ENCODE measurements at regions of chr4 and their contacts with region 1.

Region 1: GRCh38 chr4:24794916-24795665 is at the start of gene SOD3:
- DNase-seq: peak; percentile 88 to 96
- H3K4me3 ChIP-seq: peak within 1 kb of the TSS; percentile 47 to 58
- H3K27ac ChIP-seq: peak within 1 kb of the TSS; percentile 93 to 96
- H3K4me1 ChIP-seq: peaks cover 0 to 45% (median 19%) of the 10 kb centered on the region in 4 donors
- H3K27me3 ChIP-seq: no peaks in the 10 kb centered on the region
- CTCF ChIP-seq: no peak

Region 2: GRCh38 chr4:24584175-24584850 is 210.8 kb before region 1 on chr4 and contains the start of gene DHX15:
- intact Hi-C with region 1: loop called (anchors 10 kb)
- DNase-seq: peak; percentile 97
- H3K4me3 ChIP-seq: peak within 1 kb of the TSS; percentile 92 to 100
- H3K27ac ChIP-seq: peak within 1 kb of the TSS; percentile 96 to 98
- H3K4me1 ChIP-seq: peaks cover 0 to 42% (median 26%) of the 10 kb centered on the region in 4 donors
- H3K27me3 ChIP-seq: no peaks in the 10 kb centered on the region
- CTCF ChIP-seq: no peak

Region 3: GRCh38 chr4:24850674-24851073 is 55.6 kb after region 1 on chr4:
- intact Hi-C with region 1: loop called (anchors 5 kb)
- DNase-seq: peak; percentile 56 to 81
- H3K4me3 ChIP-seq: no peak overlapping the region
- H3K27ac ChIP-seq: peak overlapping the region; percentile 53
- H3K4me1 ChIP-seq: peaks cover 0 to 52% (median 22%) of the 10 kb centered on the region in 4 donors
- H3K27me3 ChIP-seq: no peaks in the 10 kb centered on the region
- CTCF ChIP-seq: no peak

Region 4: GRCh38 chr4:25030277-25031076 is 235.4 kb after region 1 on chr4 and contains the start of gene LGI2:
- intact Hi-C with region 1: loop called (anchors 5 kb)
- DNase-seq: peak; percentile 51 to 80
- H3K4me3 ChIP-seq: peak within 1 kb of the TSS; percentile 61 to 64
- H3K27ac ChIP-seq: peak within 1 kb of the TSS; percentile 63 to 74
- H3K4me1 ChIP-seq: peaks cover 0 to 25% (median 14%) of the 10 kb centered on the region in 4 donors
- H3K27me3 ChIP-seq: no peaks in the 10 kb centered on the region
- CTCF ChIP-seq: no peak

Region 5: GRCh38 chr4:25065475-25065874 is 270.4 kb after region 1 on chr4:
- intact Hi-C with region 1: loop called (anchors 10 kb)
- DNase-seq: no peak
- H3K4me3 ChIP-seq: no peak overlapping the region
- H3K27ac ChIP-seq: no peak overlapping the region
- H3K4me1 ChIP-seq: peaks cover 0 to 16% (median 0%) of the 10 kb centered on the region in 4 donors
- H3K27me3 ChIP-seq: no peaks in the 10 kb centered on the region
- CTCF ChIP-seq: no peak

Region 6: GRCh38 chr4:25159884-25160713 is 365.0 kb after region 1 on chr4 and contains the start of gene SEPSECS:
- intact Hi-C with region 1: loop called (anchors 10 kb)
- DNase-seq: peak; percentile 96 to 99
- H3K4me3 ChIP-seq: peak within 1 kb of the TSS; percentile 61 to 78
- H3K27ac ChIP-seq: peak within 1 kb of the TSS; percentile 90 to 99
- H3K4me1 ChIP-seq: peaks cover 0 to 21% (median 11%) of the 10 kb centered on the region in 4 donors
- H3K27me3 ChIP-seq: no peaks in the 10 kb centered on the region
- CTCF ChIP-seq: peak; percentile 11 to 30

Measured in tibial artery (tissue), 4 donors.